A549 (cell line): ENCODE measurements at regions of chr17 and their contacts with region 1.

Region 1: GRCh38 chr17:75749545-75750389 is 15.2 kb downstream of the GALK1 start:
- DNase-seq: peak; percentile 80 to 88
- ATAC-seq: peak; percentile 80 to 91
- H3K4me3 ChIP-seq: no peak overlapping the region
- H3K27ac ChIP-seq: peak overlapping the region; percentile 43 to 73; a peak in 5 of 6 replicates
- H3K4me1 ChIP-seq: peaks cover 12% of the 10 kb centered on the region
- CTCF ChIP-seq: peak; percentile 97
- EP300 ChIP-seq: no peak
- POLR2A ChIP-seq: no peak
- RAD21 ChIP-seq: peak; percentile 93 to 94

Region 2: GRCh38 chr17:75595277-75595918 is 154.4 kb before region 1 on chr17:
- CTCF ChIA-PET with region 1: interaction called, 42 read pairs
- POLR2A ChIA-PET with region 1: no interaction called
- DNase-seq: no peak
- ATAC-seq: peak in 1 of 2 experiments; percentile 40; a peak in 3 of 6 replicates
- H3K4me3 ChIP-seq: no peak overlapping the region
- H3K27ac ChIP-seq: 0 out of 6 replicates have a peak overlapping the region, but pooled peaks of 1 of the 2 experiments have one; percentile 1
- H3K4me1 ChIP-seq: peaks cover 4% of the 10 kb centered on the region; the same call in 2 of the 3 replicates
- CTCF ChIP-seq: no peak
- EP300 ChIP-seq: no peak
- POLR2A ChIP-seq: no peak
- RAD21 ChIP-seq: no peak

Region 3: GRCh38 chr17:75619506-75620431 is 130.0 kb before region 1 on chr17:
- CTCF ChIA-PET with region 1: interaction called, 1,931 read pairs
- POLR2A ChIA-PET with region 1: no interaction called
- DNase-seq: peak; percentile 70 to 75
- ATAC-seq: peak; percentile 57 to 81
- H3K4me3 ChIP-seq: no peak overlapping the region
- H3K27ac ChIP-seq: peak overlapping the region in 1 of 2 experiments; percentile 4; a peak in 2 of 6 replicates
- H3K4me1 ChIP-seq: peaks cover 4% of the 10 kb centered on the region
- CTCF ChIP-seq: peak; percentile 55
- EP300 ChIP-seq: no peak
- POLR2A ChIP-seq: no peak
- RAD21 ChIP-seq: peak; percentile 26 to 56; a peak in 3 of 5 replicates

Region 4: DNA sequence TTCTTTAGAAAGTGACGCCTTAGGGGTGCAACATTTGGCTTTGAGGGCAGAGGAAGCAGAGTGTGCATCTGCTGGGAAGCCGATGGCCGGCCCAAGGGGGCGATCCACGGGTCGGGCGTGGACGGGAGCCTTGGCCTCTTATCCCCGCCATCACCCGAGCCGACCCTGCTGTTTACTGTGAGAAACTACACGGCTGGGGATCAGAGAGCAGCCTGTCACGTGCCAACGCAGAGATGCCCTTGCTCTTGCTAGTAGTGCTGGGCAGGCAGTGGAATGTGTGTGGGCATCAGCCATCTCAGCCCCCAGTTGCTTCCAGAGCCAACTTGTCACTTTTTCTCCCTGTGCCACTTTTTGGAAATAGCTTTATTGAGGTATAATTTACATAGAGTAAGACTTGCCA is 55.2 kb before region 1 on chr17:
- CTCF ChIA-PET with region 1: no interaction called
- POLR2A ChIA-PET with region 1: no interaction called
- DNase-seq: no peak
- ATAC-seq: peak in 1 of 2 experiments; percentile 5; a peak in 1 of 6 replicates
- H3K4me3 ChIP-seq: no peak overlapping the region; the same call in 2 of the 3 replicates
- H3K27ac ChIP-seq: peak overlapping the region; percentile 93
- H3K4me1 ChIP-seq: peaks cover 100% of the 10 kb centered on the region
- CTCF ChIP-seq: no peak
- EP300 ChIP-seq: no peak
- POLR2A ChIP-seq: no peak
- RAD21 ChIP-seq: no peak

Region 5: GRCh38 chr17:75720725-75721462 is 28.9 kb before region 1 on chr17 and contains the start of gene ITGB4:
- CTCF ChIA-PET with region 1: interaction called, 186 read pairs
- POLR2A ChIA-PET with region 1: no interaction called
- DNase-seq: peak; percentile 42 to 75
- ATAC-seq: peak; percentile 68 to 70
- H3K4me3 ChIP-seq: peak within 1 kb of the TSS; percentile 57
- H3K27ac ChIP-seq: peak within 1 kb of the TSS; percentile 93 to 94
- H3K4me1 ChIP-seq: peaks cover 35% of the 10 kb centered on the region
- CTCF ChIP-seq: peak; percentile 29; the same call in 1 of the 3 replicates
- EP300 ChIP-seq: no peak
- POLR2A ChIP-seq: no peak
- RAD21 ChIP-seq: peak in 1 of 2 experiments; percentile 27; a peak in 2 of 5 replicates
- polyA plus RNA-seq, gene ITGB4: 19.8 and 20.6 TPM in 2 replicates

Region 6: DNA sequence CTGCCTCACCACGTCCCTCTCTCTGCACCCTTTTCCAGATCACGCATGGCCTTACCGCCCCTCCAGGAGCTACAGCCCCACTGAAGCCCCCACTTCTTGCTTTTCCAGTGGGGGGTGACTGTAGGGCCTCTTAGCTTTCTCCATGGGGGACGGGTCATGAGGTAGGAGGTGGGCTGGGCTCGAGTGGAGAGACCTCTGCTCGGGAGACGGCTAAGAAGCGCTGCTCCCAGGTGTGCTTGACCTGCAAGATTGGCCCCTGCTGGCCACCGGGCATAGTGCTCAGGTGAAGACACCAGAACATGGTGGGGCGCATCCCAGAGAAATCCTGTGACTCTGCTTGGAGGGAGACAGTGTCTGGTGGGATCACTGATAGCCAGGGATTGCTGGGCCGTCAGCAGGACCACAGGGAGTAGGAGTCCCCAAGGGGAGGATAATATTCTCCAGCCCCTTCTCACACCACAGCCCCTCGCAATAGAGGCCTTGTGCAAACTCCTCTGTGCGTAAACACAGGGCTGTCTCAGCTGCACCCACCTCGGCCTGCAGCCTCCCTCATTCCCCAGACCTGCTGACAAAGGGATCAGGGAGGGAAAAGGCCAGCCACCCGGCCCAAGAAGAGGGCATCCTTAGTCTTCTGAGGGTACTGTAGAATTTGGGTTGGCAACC is 24.2 kb after region 1 on chr17:
- CTCF ChIA-PET with region 1: interaction called, 30 read pairs
- POLR2A ChIA-PET with region 1: interaction called, 3 read pairs
- DNase-seq: no peak
- ATAC-seq: peak; percentile 27 to 47
- H3K4me3 ChIP-seq: no peak overlapping the region
- H3K27ac ChIP-seq: no peak overlapping the region
- H3K4me1 ChIP-seq: peaks cover 13% of the 10 kb centered on the region
- CTCF ChIP-seq: no peak
- EP300 ChIP-seq: no peak
- POLR2A ChIP-seq: no peak
- RAD21 ChIP-seq: no peak

Region 7: DNA sequence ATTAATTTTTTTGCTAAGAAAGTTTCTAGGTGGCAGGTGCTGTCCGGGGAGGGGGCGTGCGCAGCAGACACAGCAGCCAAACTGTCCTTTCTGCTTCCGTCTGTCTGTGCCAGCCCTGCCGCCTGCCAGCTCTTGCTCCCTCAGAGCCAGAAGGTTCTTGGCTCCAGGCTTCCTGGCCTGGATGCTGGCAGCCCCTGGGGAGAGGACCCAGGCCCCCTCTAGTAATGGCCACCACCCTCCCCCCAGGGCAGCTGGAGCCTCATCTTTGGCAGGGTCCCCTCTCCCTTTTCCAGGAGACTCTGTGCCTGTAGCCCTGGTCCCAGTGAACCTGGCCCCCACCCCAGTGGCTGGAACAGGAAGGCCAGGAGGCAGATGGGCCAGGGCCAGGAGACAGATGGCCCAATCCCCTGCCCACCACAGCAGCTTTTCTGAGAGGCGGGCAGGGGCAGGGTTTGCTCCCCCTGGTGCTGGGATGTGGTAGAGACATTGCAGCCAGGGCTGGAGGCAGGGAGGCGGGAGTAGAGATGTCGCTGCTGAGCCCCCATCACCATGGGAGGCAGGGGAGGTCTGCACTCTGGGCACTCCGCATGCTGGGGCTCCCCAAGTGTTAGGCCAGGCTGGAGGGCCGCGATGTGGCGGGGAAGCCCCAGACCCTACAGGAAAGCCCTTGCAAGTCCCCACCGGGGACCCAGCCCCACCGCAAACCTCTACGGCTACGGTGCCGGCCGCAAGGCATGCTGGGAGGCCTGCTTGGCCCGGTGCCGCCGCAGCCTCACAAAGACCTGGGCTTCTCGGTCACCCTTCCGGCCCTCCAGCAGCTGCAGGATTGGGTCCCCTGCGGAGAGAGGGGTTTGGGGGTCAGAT is 77.7 kb after region 1 on chr17:
- CTCF ChIA-PET with region 1: interaction called, 10 read pairs
- POLR2A ChIA-PET with region 1: no interaction called
- DNase-seq: peak; percentile 44 to 92
- ATAC-seq: peak; percentile 73 to 86; a peak in 5 of 6 replicates
- H3K4me3 ChIP-seq: no peak overlapping the region
- H3K27ac ChIP-seq: peak overlapping the region in 1 of 2 experiments; percentile 27; a peak in 2 of 6 replicates
- H3K4me1 ChIP-seq: peaks cover 5% of the 10 kb centered on the region; the same call in 1 of the 3 replicates
- CTCF ChIP-seq: peak; percentile 55
- EP300 ChIP-seq: no peak
- POLR2A ChIP-seq: no peak
- RAD21 ChIP-seq: peak; percentile 40 to 45; a peak in 3 of 5 replicates

Region 8: GRCh38 chr17:75927286-75927922 is 177.6 kb after region 1 on chr17:
- CTCF ChIA-PET with region 1: no interaction called
- POLR2A ChIA-PET with region 1: no interaction called
- DNase-seq: peak; percentile 62 to 80
- ATAC-seq: peak; percentile 62 to 88; a peak in 5 of 6 replicates
- H3K4me3 ChIP-seq: no peak overlapping the region
- H3K27ac ChIP-seq: no peak overlapping the region
- H3K4me1 ChIP-seq: no peaks in the 10 kb centered on the region
- CTCF ChIP-seq: peak; percentile 32
- EP300 ChIP-seq: no peak
- POLR2A ChIP-seq: no peak
- RAD21 ChIP-seq: peak in 1 of 2 experiments; percentile 31; a peak in 2 of 5 replicates